ENCODE measurements at regions of chr18 and their contacts with region 1.

Region 1: GRCh38 chr18:59268721-59269562 is 4.3 kb downstream of the RAX start:
- DNase-seq: peak; percentile 82
- ATAC-seq: peak; percentile 76
- H3K4me3 Mint-ChIP-seq: peak overlapping the region; percentile 32
- H3K27ac Mint-ChIP-seq: no peak overlapping the region
- H3K4me1 Mint-ChIP-seq: peaks cover 32% of the 10 kb centered on the region
- H3K27me3 Mint-ChIP-seq: peaks cover 77% of the 10 kb centered on the region

Region 2: GRCh38 chr18:57434536-57435494 is 1834.1 kb before region 1 on chr18 and contains the start of gene ONECUT2:
- CTCF ChIA-PET with region 1: no interaction called
- POLR2A ChIA-PET with region 1: no interaction called
- intact Hi-C with region 1: loop called in 1 of 2 experiments (anchors 5 kb)
- DNase-seq: peak; percentile 89
- ATAC-seq: peak; percentile 89
- H3K4me3 Mint-ChIP-seq: peak within 1 kb of the TSS; percentile 64
- H3K27ac Mint-ChIP-seq: no peak within 1 kb of the TSS
- H3K4me1 Mint-ChIP-seq: peaks cover 53% of the 10 kb centered on the region
- H3K27me3 Mint-ChIP-seq: peaks cover 77% of the 10 kb centered on the region
- total RNA-seq, gene ONECUT2: under 0.01 TPM in 1 of 2 experiments, not detected in the other

Region 3: DNA sequence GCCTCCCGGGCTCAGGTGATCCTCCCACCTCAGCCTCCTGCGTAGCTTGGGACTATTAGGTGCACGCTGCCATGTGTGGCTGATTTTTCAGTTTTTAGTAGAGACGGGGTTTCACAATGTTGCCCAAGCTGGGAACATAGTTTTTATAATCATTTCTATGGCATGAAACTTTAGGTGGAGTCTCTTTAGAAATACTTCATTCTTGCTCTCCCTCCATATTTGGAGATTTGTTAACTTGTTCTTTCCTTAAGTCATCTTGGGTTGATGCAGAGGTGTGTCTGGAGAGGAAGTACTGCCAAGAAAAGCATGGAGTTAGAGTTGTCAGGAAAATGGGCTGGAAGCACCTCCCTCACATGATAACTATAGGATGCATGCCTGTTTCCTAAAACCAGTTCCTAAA is 386.9 kb before region 1 on chr18:
- CTCF ChIA-PET with region 1: no interaction called
- POLR2A ChIA-PET with region 1: no interaction called
- intact Hi-C with region 1: no loop called
- DNase-seq: no peak
- ATAC-seq: no peak
- H3K4me3 Mint-ChIP-seq: no peak overlapping the region
- H3K27ac Mint-ChIP-seq: no peak overlapping the region
- H3K4me1 Mint-ChIP-seq: peaks cover under 1% of the 10 kb centered on the region
- H3K27me3 Mint-ChIP-seq: peaks cover 8% of the 10 kb centered on the region

Region 4: GRCh38 chr18:59249205-59249774 is 19.7 kb before region 1 on chr18:
- CTCF ChIA-PET with region 1: interaction called, 4 read pairs
- POLR2A ChIA-PET with region 1: no interaction called
- intact Hi-C with region 1: loop called in 1 of 2 experiments (anchors 1 kb)
- DNase-seq: peak; percentile 63
- ATAC-seq: no peak
- H3K4me3 Mint-ChIP-seq: no peak overlapping the region
- H3K27ac Mint-ChIP-seq: no peak overlapping the region
- H3K4me1 Mint-ChIP-seq: no peaks in the 10 kb centered on the region
- H3K27me3 Mint-ChIP-seq: peaks cover 43% of the 10 kb centered on the region

Region 5: DNA sequence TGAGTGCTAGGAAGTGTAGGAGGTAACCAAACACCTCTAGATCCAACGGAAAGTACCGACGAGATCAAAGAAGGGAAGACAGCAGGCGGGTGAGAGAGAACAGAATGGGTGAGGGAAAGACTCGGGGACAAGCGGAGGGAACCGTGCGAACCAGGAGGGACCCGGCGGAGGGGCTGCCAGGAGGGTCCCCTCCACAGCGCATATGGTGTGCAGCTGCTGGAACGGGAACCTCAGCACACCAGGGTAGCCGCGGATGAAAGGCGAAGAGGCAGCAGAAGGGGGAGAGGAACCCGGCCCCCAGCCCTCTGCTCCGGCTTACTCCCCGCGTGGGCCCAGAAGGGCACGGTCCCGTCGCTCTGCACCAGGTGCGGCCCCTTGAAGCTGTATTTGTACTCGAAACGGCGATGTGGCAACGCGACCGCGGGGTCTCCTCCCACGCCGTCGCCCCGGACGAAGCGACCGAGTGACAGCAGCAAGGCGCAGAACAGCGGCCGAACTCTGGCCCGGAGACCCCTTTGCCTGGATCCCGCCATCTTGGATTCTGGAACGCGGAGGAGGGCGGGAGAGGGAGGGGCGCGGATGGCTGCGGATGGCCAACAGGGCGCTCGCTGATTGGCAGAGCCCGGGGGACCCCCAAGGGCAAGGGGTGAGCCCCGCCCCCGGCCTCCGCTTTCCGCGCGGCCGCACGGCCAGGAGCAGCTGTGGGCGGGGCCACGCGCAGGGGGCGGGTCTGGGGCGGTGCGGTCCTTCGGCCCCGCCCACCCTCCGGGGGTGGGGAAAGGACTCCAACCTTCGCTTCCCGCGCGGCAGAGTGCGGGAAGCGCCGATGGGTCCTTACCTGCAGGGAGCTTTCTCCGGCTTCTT is 90.0 kb after region 1 on chr18 and contains the start of gene LMAN1:
- CTCF ChIA-PET with region 1: interaction called, 3 read pairs
- POLR2A ChIA-PET with region 1: no interaction called
- intact Hi-C with region 1: loop called in 1 of 2 experiments (anchors 2 kb)
- DNase-seq: peak; percentile 97
- ATAC-seq: peak; percentile 93
- H3K4me3 Mint-ChIP-seq: peak within 1 kb of the TSS; percentile 98
- H3K27ac Mint-ChIP-seq: peak within 1 kb of the TSS; percentile 99
- H3K4me1 Mint-ChIP-seq: peaks cover 29% of the 10 kb centered on the region
- H3K27me3 Mint-ChIP-seq: no peaks in the 10 kb centered on the region
- total RNA-seq, gene LMAN1: 121 to 134 TPM

Region 6: GRCh38 chr18:59697236-59697932 is 428.4 kb after region 1 on chr18 and contains the start of gene CCBE1:
- CTCF ChIA-PET with region 1: no interaction called
- POLR2A ChIA-PET with region 1: no interaction called
- intact Hi-C with region 1: loop called in 1 of 2 experiments (anchors 10 kb)
- DNase-seq: peak; percentile 77
- ATAC-seq: peak; percentile 53
- H3K4me3 Mint-ChIP-seq: no peak within 1 kb of the TSS
- H3K27ac Mint-ChIP-seq: no peak within 1 kb of the TSS
- H3K4me1 Mint-ChIP-seq: peaks cover 8% of the 10 kb centered on the region
- H3K27me3 Mint-ChIP-seq: peaks cover 46% of the 10 kb centered on the region
- total RNA-seq, gene CCBE1: 0.14 TPM in 1 of 2 experiments, not detected in the other